HEK293 (cell line): ENCODE measurements at regions of chr5 and their contacts with region 1.

Region 1: GRCh38 chr5:150022163-150022540 is 21.6 kb downstream of the HMGXB3 start:
- H3K4me3 ChIP-seq: no peak overlapping the region
- H3K27ac ChIP-seq: no peak overlapping the region
- H3K4me1 ChIP-seq: no peaks in the 10 kb centered on the region
- CTCF ChIP-seq: no peak

Region 2: GRCh38 chr5:150006318-150006717 is 15.8 kb before region 1 on chr5:
- CTCF ChIA-PET with region 1: interaction called, 11 read pairs
- POLR2A ChIA-PET with region 1: interaction called, 5 read pairs
- H3K4me3 ChIP-seq: no peak overlapping the region
- H3K27ac ChIP-seq: no peak overlapping the region
- H3K4me1 ChIP-seq: peaks cover 6% of the 10 kb centered on the region
- CTCF ChIP-seq: no peak

Region 3: GRCh38 chr5:150036513-150036912 is 14.4 kb after region 1 on chr5:
- CTCF ChIA-PET with region 1: no interaction called
- POLR2A ChIA-PET with region 1: no interaction called
- H3K4me3 ChIP-seq: no peak overlapping the region
- H3K27ac ChIP-seq: no peak overlapping the region
- H3K4me1 ChIP-seq: no peaks in the 10 kb centered on the region
- CTCF ChIP-seq: no peak

Region 4: DNA sequence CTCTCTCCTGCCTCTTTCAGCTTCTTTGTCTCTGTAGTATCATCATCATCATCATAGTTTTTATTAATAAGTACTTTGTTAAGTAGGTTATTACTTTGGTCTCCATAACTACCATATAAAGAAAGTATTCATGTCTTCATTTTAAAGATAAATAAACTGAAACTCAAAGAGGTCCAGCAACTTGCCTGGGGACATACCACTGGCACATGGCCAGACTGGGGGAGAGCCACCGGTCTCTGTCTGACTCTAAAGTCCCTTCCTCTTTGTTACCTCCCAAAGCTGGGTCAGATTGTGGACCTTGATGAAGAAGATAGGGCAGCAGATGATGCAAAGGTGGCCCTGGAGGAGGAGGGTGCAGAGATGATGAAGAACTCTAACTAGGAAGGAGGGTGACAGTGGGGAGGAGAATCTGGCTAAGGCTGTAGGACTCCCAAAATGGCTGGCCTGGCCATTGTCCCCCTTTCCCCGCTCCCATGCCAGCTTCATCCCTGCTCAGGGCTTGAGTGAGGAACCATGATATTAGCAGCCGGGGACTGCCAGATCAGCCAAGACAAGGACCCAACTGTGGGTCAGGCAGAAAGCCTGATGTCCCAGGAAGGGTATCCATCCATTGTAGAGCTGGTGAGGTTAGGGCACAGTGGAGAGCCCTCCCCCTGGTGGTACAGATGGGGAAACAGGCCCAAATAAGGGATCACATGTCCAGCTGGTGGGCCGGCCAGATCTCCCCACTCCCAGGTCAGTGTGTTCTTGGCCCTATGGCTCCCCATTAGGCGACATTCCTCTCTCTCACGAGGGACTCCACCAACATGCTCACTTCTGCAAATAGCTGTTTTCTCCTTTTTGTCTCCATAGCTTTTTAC is 153.2 kb after region 1 on chr5:
- CTCF ChIA-PET with region 1: no interaction called
- POLR2A ChIA-PET with region 1: interaction called, 10 read pairs
- H3K4me3 ChIP-seq: no peak overlapping the region
- H3K27ac ChIP-seq: no peak overlapping the region
- H3K4me1 ChIP-seq: no peaks in the 10 kb centered on the region
- CTCF ChIP-seq: peak; percentile 61